ENCODE measurements at regions of chr5 and their contacts with region 1.

Region 1: DNA sequence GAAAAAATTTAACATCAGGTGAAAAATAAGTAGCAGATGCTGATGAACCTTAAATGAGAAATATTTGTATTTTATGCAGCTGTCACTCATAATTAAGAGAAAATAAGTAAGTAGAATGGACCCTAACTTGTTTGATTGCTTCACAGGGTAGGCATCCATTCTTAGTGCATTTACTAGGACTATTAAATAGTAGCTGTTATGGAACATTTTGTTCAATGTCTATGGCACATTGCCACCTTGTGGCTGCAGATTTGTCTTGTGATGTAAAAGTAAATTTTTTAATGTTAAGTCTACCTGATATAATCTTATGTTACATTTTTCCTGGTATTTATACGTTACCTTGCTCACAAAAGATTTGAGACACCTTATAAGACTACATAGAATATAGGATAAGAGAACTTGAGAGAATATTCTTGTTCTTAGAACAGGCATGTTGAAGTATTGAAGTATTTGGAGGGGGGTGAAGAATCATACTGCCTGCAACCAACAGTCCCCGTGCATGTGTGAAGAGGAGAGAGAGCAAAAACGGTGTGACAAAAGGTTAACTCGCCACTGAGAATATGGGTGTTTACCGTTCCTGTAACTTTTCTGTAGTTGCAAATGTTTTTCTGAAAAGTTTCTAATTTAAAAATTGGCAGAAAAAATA is 161.1 kb downstream of the MAST4 start:
- DNase-seq: peak; percentile 27

Region 2: GRCh38 chr5:66306105-66306843 is 451.0 kb before region 1 on chr5:
- CTCF ChIA-PET with region 1: interaction called, 10 read pairs
- POLR2A ChIA-PET with region 1: no interaction called
- DNase-seq: peak; percentile 79

Region 3: GRCh38 chr5:66646621-66647020 is 110.7 kb before region 1 on chr5:
- CTCF ChIA-PET with region 1: no interaction called
- POLR2A ChIA-PET with region 1: no interaction called
- DNase-seq: no peak

Region 4: DNA sequence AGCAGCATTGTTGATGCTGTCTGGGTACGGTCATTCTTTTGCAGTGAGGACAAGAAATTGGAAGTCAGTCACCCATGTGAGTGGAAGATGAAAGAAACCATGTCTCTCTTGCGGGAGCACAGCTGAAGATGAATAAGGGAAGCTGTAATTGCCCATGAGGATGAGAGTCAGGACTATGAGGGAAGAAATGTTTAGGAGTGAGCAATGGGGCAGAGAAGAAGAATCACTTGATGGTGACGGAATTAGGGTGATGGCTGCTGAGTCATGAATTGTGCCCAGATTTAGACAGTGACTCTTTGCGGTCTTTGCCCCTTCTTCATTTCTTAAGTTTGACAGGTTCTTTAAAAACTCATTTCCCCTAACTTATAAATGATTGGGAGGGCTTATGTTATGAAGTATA is 22.2 kb after region 1 on chr5:
- CTCF ChIA-PET with region 1: no interaction called
- POLR2A ChIA-PET with region 1: no interaction called
- DNase-seq: no peak

Region 5: GRCh38 chr5:66864331-66864840 is 107.1 kb after region 1 on chr5:
- CTCF ChIA-PET with region 1: no interaction called
- POLR2A ChIA-PET with region 1: no interaction called
- DNase-seq: no peak

Region 6: DNA sequence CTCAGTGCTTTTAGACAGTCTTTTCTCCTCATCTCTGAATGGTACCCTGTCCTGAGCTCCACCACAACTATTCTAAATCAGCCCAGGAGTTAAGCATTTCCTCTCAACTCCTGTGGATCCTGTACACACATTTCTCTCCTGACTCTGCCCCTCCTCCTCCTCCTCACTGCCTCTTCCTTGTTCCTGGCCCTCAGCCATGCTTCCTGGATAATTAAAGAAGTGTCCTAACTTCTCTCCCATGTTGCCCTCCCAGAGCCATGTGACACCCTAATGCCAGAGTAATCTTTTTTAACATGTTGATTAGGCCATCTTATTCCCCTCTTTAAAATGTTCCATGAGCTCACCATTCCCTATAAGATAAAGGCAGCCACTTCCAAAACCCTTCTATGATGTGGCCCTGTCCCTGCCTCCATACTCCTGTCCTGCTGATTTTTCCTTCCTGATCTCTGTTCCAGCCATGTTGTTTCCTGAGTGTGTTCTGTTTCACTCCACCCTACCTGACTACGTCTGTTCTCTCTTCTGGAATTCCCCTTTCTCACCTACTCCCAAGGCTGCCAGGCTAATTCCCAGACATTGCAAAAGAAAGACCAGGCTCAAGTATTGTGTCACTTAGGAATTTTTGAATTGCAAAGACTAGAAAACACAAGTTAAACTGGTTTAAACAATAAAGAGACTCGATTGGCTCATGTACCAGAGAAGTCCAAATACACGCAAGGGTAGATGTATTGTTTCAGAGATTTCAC is 134.0 kb after region 1 on chr5:
- CTCF ChIA-PET with region 1: no interaction called
- POLR2A ChIA-PET with region 1: no interaction called
- DNase-seq: no peak

Measured in HEK293T (cell line).